Activated B cell treated with CpG ODN at 0.5 μM for 24 hours (primary cell): ENCODE measurements at regions of chr13 and their contacts with region 1.

Region 1: GRCh38 chr13:52159321-52160086 is at the start of gene NEK3:
- DNase-seq: peak; percentile 69
- ATAC-seq: peak; percentile 81
- H3K4me3 Mint-ChIP-seq: peak within 1 kb of the TSS; percentile 90
- H3K27ac Mint-ChIP-seq: peak within 1 kb of the TSS; percentile 81
- H3K4me1 Mint-ChIP-seq: peaks cover 24% of the 10 kb centered on the region
- H3K27me3 Mint-ChIP-seq: no peaks in the 10 kb centered on the region
- CTCF ChIP-seq: no peak
- total RNA-seq, gene NEK3: 9.1 and 12.0 TPM in 2 replicates

Region 2: GRCh38 chr13:52011632-52012511 is 147.6 kb before region 1 on chr13 and contains the start of gene ALG11:
- CTCF ChIA-PET with region 1: interaction called, 3 read pairs
- POLR2A ChIA-PET with region 1: interaction called, 8 read pairs
- intact Hi-C with region 1: loop called (anchors 1 kb)
- DNase-seq: peak; percentile 98
- ATAC-seq: peak; percentile 99
- H3K4me3 Mint-ChIP-seq: peak within 1 kb of the TSS; percentile 99
- H3K27ac Mint-ChIP-seq: peak within 1 kb of the TSS; percentile 89
- H3K4me1 Mint-ChIP-seq: peaks cover 19% of the 10 kb centered on the region
- H3K27me3 Mint-ChIP-seq: peaks cover 16% of the 10 kb centered on the region
- CTCF ChIP-seq: no peak
- total RNA-seq, gene ALG11: 31.8 and 36.9 TPM in 2 replicates